BJ (cell line): ENCODE measurements at regions of chr2 and their contacts with region 1.

Region 1: DNA sequence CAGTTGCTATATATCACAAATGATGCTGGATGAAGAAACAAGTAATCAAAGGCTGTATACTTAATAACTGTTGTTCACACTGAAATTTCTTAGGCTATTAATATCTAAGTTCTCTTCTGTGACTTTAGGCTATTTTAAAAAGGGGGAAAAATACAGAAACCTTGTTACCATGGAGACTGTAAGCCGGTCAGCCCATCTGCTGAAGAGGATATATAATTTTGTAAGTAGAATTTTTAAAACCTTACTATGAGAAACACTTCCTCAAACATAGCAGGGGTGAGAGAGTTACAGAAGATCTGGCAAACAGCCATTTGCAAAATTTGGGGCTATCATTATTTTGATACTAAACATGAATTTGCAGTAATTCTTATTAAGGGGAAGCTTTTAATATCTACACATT is 27.8 kb downstream of the CACNB4 start:
- DNase-seq: no peak
- H3K4me3 ChIP-seq: no peak overlapping the region
- H3K27me3 ChIP-seq: no peaks in the 10 kb centered on the region; the same call in 1 of the 2 replicates
- CTCF ChIP-seq: no peak

Region 2: GRCh38 chr2:152100961-152101360 is 29.9 kb after region 1 on chr2:
- CTCF ChIA-PET with region 1: no interaction called
- POLR2A ChIA-PET with region 1: interaction called, 18 read pairs
- DNase-seq: no peak
- H3K4me3 ChIP-seq: no peak overlapping the region
- H3K27me3 ChIP-seq: peaks cover 30% of the 10 kb centered on the region
- CTCF ChIP-seq: no peak

Region 3: GRCh38 chr2:152227969-152228592 is 157.0 kb after region 1 on chr2:
- CTCF ChIA-PET with region 1: no interaction called
- POLR2A ChIA-PET with region 1: no interaction called
- DNase-seq: peak; percentile 22
- H3K4me3 ChIP-seq: no peak overlapping the region
- H3K27me3 ChIP-seq: no peaks in the 10 kb centered on the region
- CTCF ChIP-seq: no peak

Region 4: DNA sequence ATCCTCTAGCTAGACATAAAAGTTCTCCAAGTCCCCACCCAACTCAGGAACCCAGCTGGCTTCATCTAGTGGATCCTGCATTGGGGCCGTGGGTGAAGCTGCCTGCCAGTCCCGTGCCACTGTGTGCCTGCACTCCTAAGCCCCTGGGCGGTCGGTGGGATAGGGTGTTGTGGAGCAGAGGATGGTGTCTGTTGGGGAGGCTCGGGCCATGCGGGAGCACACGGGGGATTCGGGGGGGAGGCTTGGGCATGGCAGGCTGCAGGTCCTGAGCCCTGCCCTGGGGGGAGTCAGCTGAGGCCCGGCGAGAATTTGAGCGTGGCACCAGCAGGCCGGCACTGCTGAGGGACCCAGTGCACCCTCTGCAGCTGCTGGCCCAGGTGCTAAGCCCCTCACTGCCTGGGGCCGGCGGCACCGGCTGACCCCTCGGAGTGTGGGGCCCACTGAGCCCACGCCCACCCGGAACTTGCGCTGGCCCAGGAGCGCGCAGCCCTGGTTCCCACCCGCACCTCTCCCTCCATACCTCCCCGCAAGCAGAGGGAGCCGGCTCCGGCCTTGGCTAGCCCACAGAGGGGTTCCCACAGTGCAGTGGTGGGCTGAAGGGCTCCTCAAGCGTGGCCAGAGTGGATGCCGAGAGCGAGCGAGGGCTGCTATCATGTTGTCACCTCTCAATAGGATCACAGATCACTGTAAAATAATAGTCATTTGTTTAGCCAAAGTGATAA is 733.8 kb after region 1 on chr2:
- CTCF ChIA-PET with region 1: no interaction called
- POLR2A ChIA-PET with region 1: no interaction called
- DNase-seq: no peak
- H3K4me3 ChIP-seq: no peak overlapping the region
- H3K27me3 ChIP-seq: no peaks in the 10 kb centered on the region
- CTCF ChIP-seq: no peak